PC-3 (cell line): ENCODE measurements at regions of chr2 and their contacts with region 1.

Region 1: DNA sequence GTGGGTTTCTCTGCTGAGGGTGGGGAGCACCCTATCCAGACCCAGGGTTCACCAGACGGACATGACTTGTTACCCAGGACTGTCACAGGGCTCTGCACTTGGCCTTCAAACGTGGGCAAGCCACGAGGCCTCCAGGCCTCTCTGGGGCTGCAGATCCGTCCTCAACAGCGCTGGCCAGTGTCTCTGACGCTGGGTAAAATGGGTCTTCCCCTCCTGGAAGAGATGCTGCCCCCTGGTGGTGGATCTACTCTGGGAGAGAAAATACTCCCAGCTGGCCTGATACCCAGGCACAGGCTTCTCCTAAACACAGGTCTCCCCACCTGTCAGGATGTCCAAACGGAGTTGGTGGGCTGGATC is 3.7 kb downstream of the GPR17 start:
- DNase-seq: peak; percentile 94
- ATAC-seq: peak; percentile 74
- H3K4me3 ChIP-seq: no peak overlapping the region
- H3K27ac ChIP-seq: peak overlapping the region; percentile 56
- H3K4me1 ChIP-seq: peaks cover 30% of the 10 kb centered on the region
- H3K27me3 ChIP-seq: no peaks in the 10 kb centered on the region
- CTCF ChIP-seq: peak; percentile 90

Region 2: DNA sequence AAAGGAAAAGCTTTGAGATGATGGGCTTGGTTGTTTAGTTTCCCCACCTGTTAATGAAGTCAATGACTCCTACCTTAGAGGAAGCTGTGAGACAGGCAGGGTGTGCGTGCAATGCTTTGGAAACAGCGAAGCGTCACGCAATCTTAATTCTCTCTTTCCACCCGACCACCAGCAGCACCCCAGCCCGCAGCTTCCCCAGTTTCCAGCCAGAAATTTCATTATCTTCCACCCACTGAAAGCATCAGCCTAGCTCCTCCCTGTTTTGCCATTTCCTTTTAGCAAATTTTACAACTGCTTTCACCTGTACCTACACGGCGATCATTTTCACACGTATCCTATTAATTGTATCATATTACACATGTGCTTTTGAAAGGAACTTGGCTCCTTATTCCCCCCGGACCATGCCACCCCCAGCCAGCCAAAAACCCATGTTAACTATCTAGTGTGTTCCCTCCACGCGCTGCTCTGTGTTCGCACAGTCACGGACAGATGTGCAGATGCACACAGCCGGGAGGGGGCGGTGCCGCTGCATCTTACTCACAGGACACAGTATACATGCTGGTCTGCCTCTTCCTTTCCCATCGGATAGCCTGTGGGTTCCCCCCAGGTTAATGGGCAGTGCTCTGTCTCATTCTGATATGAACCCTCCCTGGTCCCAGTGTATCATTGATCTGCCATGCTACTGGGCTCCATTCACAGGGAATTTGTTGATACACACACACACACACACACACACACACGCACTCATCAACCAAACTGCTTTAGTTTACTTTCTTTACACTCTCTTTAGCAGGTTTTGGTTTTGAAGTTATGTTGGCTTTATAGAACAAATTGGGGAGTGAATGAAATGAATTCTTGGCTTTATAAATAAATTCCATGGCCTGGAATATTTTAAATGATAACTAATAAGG is 451.9 kb before region 1 on chr2:
- CTCF ChIA-PET with region 1: no interaction called
- POLR2A ChIA-PET with region 1: no interaction called
- intact Hi-C with region 1: loop called (anchors 10 kb)
- DNase-seq: peak; percentile 85
- ATAC-seq: peak; percentile 100
- H3K4me3 ChIP-seq: peak overlapping the region; percentile 65
- H3K27ac ChIP-seq: no peak overlapping the region
- H3K4me1 ChIP-seq: no peaks in the 10 kb centered on the region
- H3K27me3 ChIP-seq: no peaks in the 10 kb centered on the region
- CTCF ChIP-seq: peak; percentile 95

Region 3: DNA sequence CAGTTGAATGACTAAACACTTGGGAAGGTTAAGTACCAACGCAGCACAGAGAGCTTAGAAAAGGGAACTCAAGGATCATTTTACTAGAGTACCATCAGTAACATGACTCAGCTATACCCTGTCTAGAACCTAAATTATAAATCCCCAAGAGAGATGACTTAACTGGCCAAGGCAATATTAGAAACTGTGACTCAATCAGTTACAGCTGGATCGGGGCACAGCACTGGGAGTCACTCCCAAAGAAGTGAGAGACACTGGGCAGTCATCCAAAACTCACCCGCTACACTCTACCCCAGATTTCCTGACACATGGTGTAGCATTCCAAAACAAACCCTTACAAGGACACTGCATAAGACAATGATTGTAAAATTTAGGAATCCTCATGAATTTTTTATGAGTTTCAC is 141.0 kb before region 1 on chr2:
- CTCF ChIA-PET with region 1: no interaction called
- POLR2A ChIA-PET with region 1: no interaction called
- intact Hi-C with region 1: loop called (anchors 1 kb)
- DNase-seq: peak; percentile 99
- ATAC-seq: peak; percentile 95
- H3K4me3 ChIP-seq: peak overlapping the region; percentile 31; the same call in 1 of the 2 replicates
- H3K27ac ChIP-seq: peak overlapping the region; percentile 79
- H3K4me1 ChIP-seq: peaks cover 42% of the 10 kb centered on the region
- H3K27me3 ChIP-seq: no peaks in the 10 kb centered on the region
- CTCF ChIP-seq: no peak

Region 4: DNA sequence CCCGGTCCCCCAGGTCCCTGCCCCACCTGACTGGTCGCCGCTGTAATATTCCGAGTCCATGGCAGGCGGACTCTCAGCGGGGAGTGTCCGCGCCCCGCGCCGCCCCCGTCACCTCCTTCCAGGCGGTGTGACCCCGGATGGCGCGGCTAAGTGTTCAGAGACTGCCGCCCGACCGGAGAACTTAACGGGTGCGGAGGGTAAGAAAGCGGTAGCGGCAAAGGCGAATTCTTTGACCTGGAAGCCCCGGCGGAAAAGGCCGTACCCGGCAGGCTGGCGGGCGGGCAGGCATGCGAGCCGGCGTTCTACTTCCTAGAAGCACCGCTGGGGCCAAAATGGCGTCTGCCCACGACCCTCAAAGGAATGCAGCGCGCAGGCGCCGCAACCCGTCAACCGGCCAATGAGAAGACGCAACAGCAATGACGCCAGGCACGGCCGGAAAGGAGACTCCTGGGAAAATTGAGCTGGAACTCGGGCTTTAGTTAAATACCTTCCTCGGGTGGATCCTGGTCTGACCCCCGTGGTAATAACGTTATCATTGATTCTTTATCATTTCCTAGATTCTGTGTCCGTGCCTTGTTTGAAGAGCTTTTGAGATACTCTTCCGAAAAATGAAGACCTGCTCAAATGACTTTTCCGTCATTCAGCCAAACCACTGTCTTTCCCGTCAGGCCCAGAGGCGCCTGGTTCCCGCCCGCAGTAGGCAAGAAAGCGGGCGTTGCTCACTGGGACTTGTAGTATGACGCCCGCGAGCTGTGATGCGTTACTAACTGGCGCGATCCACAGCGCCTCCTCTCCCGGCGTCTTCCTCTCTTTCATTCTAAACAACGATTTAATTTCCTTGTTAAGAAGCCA is 123.3 kb before region 1 on chr2 and contains the start of gene IWS1:
- CTCF ChIA-PET with region 1: no interaction called
- POLR2A ChIA-PET with region 1: no interaction called
- intact Hi-C with region 1: loop called (anchors 1 kb)
- DNase-seq: peak; percentile 96
- ATAC-seq: peak; percentile 86
- H3K4me3 ChIP-seq: peak within 1 kb of the TSS; percentile 95
- H3K27ac ChIP-seq: peak within 1 kb of the TSS; percentile 90
- H3K4me1 ChIP-seq: peaks cover 37% of the 10 kb centered on the region
- H3K27me3 ChIP-seq: no peaks in the 10 kb centered on the region
- CTCF ChIP-seq: 0 out of 2 replicates have a peak, but pooled peaks have one; percentile 32
- total RNA-seq, gene IWS1: 51.4 and 63.6 TPM in 2 replicates

Region 5: DNA sequence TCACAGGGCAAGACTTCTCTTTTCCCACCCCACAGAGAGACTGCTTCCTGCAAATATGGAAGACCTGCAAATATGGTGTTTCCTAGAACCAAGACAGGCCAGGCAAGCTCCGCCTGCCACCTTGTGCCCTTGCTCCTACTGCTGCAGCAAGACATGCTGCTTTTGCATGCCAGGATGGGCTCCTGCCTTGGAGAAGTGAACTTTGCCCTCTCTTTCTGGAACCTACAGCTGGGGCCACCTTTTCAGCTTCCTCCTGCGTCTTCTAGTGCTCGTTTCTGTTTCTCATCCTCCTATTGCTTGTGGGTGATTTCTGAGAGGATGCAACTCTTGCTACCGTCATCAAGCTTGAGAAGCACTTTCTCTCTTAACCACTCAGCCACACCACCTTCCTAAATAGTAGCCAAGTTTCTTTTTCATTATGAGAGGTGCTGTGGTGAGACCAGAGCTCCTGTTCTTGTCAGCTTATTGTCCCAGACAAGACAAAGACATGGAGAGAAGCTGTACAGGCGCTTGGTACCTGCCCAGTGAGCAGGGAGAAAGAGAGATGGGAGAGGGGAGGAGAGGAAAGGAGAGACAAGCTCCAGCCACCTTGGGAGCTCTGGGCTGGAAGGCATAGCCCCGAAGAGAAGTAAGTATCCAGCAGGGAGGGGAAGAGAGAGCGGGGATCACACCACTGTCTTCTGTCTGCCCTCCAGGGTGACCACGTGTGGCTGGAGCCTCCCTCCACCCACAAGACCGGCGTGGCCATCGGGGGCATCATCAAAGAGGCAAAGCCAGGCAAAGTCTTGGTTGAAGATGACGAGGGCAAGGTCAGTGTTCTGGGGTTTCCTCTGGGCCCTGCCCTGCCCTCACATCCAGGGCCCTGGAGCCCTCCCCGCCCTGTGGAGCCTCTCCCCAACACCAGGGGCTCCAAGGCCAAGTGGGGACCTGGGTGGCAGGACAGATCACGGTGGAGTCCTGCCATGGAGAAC is 85.9 kb before region 1 on chr2:
- CTCF ChIA-PET with region 1: no interaction called
- POLR2A ChIA-PET with region 1: no interaction called
- intact Hi-C with region 1: no loop called
- DNase-seq: no peak
- ATAC-seq: no peak
- H3K4me3 ChIP-seq: no peak overlapping the region
- H3K27ac ChIP-seq: no peak overlapping the region
- H3K4me1 ChIP-seq: no peaks in the 10 kb centered on the region; the same call in 1 of the 2 replicates
- H3K27me3 ChIP-seq: no peaks in the 10 kb centered on the region
- CTCF ChIP-seq: no peak

Region 6: DNA sequence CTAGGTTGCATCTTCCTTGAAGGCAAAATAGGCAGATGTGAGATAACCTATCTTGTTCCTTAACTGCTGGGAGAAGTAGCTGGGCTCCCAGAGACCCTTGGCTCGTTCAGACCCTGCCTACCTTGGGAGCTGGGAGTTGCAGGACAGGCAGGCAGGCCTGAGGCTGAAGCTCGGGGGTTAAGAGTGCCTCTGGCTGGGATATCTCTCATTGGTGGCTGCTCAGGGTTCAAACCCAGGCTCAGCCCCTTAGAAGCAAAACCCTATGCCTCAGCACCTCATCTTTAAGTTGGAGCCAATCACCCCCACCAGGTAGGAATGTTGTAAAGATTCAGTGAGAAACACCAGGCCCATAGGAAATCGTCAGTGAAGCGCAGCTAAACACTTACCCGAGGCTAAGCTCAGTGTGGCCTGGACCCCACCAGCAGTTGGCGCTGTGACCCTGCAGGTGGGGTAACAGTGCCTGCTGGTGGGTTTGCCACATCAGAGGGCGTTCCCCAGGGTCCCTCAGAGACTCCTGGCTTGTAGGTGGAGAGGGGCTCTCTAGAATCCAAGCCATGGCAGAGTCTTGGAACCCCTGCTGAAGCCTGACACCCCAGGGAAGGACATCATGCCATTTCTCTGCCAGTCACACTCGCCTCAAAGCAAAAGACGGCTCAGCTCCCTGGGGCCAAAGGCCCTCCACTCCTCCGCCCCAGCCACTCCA is 58.3 kb before region 1 on chr2:
- CTCF ChIA-PET with region 1: interaction called, 17 read pairs
- POLR2A ChIA-PET with region 1: no interaction called
- intact Hi-C with region 1: loop called (anchors 1 kb)
- DNase-seq: peak; percentile 84
- ATAC-seq: peak; percentile 99
- H3K4me3 ChIP-seq: no peak overlapping the region
- H3K27ac ChIP-seq: no peak overlapping the region
- H3K4me1 ChIP-seq: peaks cover 18% of the 10 kb centered on the region
- H3K27me3 ChIP-seq: no peaks in the 10 kb centered on the region
- CTCF ChIP-seq: peak; percentile 98

Region 7: GRCh38 chr2:127597984-127598380 is 51.7 kb before region 1 on chr2:
- CTCF ChIA-PET with region 1: no interaction called
- POLR2A ChIA-PET with region 1: no interaction called
- intact Hi-C with region 1: loop called (anchors 2 kb)
- DNase-seq: peak; percentile 96
- ATAC-seq: peak; percentile 84
- H3K4me3 ChIP-seq: no peak overlapping the region
- H3K27ac ChIP-seq: peak overlapping the region; percentile 83
- H3K4me1 ChIP-seq: peaks cover 40% of the 10 kb centered on the region
- H3K27me3 ChIP-seq: no peaks in the 10 kb centered on the region
- CTCF ChIP-seq: no peak

Region 8: DNA sequence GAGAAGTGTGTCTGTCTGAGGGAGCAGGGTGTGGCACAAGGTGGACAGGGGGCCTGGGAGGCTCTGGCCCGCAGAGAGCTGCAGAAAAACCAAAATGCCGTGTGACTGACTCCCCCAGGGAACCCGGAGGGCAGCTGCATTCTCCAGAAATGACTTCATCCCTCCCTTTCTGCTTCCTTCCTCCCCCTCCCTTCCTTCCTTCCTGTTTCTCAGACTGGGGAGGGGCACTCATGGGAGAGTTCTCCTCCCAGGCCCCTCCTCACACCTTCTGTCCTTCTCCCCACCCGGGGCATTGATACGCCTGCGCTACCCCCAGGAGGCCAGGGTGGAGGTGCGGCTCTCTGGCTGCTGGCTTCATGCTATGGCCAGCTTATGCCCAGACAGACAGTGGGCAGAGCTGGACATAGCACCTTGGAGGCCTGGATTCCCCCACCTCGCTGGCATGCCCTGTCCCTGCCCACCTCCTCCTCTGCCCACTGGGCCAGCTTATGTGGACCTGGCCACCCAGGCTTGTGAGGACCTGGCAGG is 11.9 kb before region 1 on chr2:
- CTCF ChIA-PET with region 1: no interaction called
- POLR2A ChIA-PET with region 1: interaction called, 28 read pairs
- intact Hi-C with region 1: no loop called
- DNase-seq: peak; percentile 97
- ATAC-seq: peak; percentile 82
- H3K4me3 ChIP-seq: no peak overlapping the region
- H3K27ac ChIP-seq: peak overlapping the region; percentile 99
- H3K4me1 ChIP-seq: peaks cover 26% of the 10 kb centered on the region
- H3K27me3 ChIP-seq: no peaks in the 10 kb centered on the region
- CTCF ChIP-seq: no peak

Region 9: DNA sequence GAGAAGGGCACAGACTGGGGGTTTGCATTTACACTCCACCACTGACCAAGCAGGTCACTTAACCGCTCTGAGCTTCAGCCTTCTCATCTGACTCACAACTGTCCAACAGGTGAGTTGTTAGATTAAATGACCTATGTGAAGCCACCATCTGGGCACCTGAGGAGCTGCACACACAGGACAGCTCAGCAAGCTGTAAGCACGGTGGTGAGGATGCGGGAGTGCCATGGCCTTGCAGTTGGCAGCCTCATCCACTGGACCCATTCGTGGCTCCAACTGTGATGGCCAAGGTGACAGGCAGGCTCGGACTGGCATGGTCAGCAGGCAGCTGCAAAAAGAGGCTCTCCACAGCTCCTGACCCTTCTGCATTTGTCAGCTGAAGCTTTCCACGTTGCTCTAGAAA is 259.4 kb after region 1 on chr2:
- CTCF ChIA-PET with region 1: no interaction called
- POLR2A ChIA-PET with region 1: no interaction called
- intact Hi-C with region 1: no loop called
- DNase-seq: peak; percentile 56
- ATAC-seq: peak; percentile 31
- H3K4me3 ChIP-seq: no peak overlapping the region
- H3K27ac ChIP-seq: no peak overlapping the region
- H3K4me1 ChIP-seq: peaks cover 4% of the 10 kb centered on the region
- H3K27me3 ChIP-seq: no peaks in the 10 kb centered on the region
- CTCF ChIP-seq: peak; percentile 34; the same call in 1 of the 2 replicates